ENCODE measurements at regions of chr4 and their contacts with region 1.

Region 1: GRCh38 chr4:2441393-2442174 is 22.8 kb downstream of the CFAP99 start:
- DNase-seq: peak; percentile 78
- H3K4me3 ChIP-seq: no peak overlapping the region
- H3K27ac ChIP-seq: no peak overlapping the region
- H3K4me1 ChIP-seq: no peaks in the 10 kb centered on the region
- H3K27me3 ChIP-seq: no peaks in the 10 kb centered on the region
- CTCF ChIP-seq: peak; percentile 91 to 92
- POLR2A ChIP-seq: no peak

Region 2: GRCh38 chr4:2280531-2281300 is 160.9 kb before region 1 on chr4:
- CTCF ChIA-PET with region 1: interaction called, 3 read pairs
- POLR2A ChIA-PET with region 1: no interaction called
- dilution Hi-C with region 1: no loop called
- intact Hi-C with region 1: loop called (anchors 1 kb)
- DNase-seq: no peak
- H3K4me3 ChIP-seq: no peak overlapping the region
- H3K27ac ChIP-seq: no peak overlapping the region
- H3K4me1 ChIP-seq: peaks cover 10% of the 10 kb centered on the region
- H3K27me3 ChIP-seq: no peaks in the 10 kb centered on the region
- CTCF ChIP-seq: peak in 1 of 2 donors; percentile 9
- POLR2A ChIP-seq: no peak

Region 3: DNA sequence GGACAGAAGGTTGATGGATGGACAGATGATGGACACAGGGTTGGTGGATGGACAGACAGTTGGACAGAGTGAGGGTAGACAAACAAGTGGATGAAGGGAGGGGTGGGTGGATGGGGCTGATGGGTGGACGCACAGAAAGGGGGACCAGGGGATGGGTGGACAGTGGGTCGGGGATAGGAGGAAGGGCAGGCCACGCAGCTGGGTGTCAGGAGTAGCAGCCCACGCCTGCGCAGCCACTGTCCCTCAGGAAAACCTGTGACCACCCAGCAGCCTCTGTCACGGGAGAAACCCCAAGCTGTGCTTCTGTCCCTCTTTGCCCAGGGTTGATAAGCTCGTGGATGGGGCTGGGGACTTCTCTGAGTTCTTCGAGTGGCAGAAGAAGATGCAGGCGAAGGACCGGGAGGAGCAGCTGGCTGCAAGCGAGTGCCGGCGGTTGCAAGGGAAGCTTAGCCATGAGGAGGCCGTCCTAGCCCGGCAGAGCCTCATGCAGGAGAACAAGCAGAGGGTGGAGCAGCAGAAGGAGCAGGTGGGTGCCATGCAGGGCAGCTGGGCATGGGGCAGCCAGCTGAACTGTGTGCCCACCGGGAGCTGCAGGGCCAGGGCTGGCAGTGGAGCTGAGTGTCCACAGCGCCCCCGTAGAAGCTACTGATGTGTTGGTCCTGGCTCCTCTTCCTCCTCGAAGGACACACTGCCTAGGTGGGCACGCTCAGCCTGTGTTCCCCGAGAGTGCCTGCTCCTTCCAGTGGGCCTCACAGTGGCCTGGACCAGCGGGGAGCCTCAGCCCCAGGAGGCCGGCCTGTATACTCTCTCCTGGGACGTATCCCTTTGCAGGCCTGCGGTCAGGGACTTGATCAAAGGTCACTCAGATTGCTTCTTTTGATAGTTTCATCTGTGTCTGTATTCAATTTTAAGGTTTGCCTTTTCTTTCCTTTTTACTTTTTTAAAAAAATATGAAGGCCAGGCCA is 10.5 kb after region 1 on chr4:
- CTCF ChIA-PET with region 1: interaction called, 11 read pairs
- POLR2A ChIA-PET with region 1: no interaction called
- dilution Hi-C with region 1: no loop called
- intact Hi-C with region 1: no loop called
- DNase-seq: no peak
- H3K4me3 ChIP-seq: no peak overlapping the region
- H3K27ac ChIP-seq: no peak overlapping the region
- H3K4me1 ChIP-seq: no peaks in the 10 kb centered on the region
- H3K27me3 ChIP-seq: no peaks in the 10 kb centered on the region
- CTCF ChIP-seq: no peak
- POLR2A ChIP-seq: no peak

Region 4: GRCh38 chr4:2755837-2756694 is 314.5 kb after region 1 on chr4 and contains the start of gene TNIP2:
- CTCF ChIA-PET with region 1: no interaction called
- POLR2A ChIA-PET with region 1: no interaction called
- dilution Hi-C with region 1: no loop called
- intact Hi-C with region 1: no loop called
- DNase-seq: peak; percentile 75
- H3K4me3 ChIP-seq: peak within 1 kb of the TSS; percentile 63 to 78 (median 78)
- H3K27ac ChIP-seq: peak within 1 kb of the TSS; percentile 45
- H3K4me1 ChIP-seq: peaks cover 9% of the 10 kb centered on the region
- H3K27me3 ChIP-seq: no peaks in the 10 kb centered on the region
- CTCF ChIP-seq: peak; percentile 26 to 39
- POLR2A ChIP-seq: peak; percentile 87
- total RNA-seq, gene TNIP2: 49.0 and 52.1 TPM in 2 replicates